Naive thymus-derived CD4-positive, alpha-beta T cell (primary cell): ENCODE measurements at regions of chr3 and their contacts with region 1.

Region 1: GRCh38 chr3:49673715-49674496 is at the start of gene APEH:
- DNase-seq: peak; percentile 94 to 99 (median 98)
- ATAC-seq: peak; percentile 93
- H3K4me3 ChIP-seq: peak within 1 kb of the TSS; percentile 79
- H3K4me3 Mint-ChIP-seq: peak within 1 kb of the TSS; percentile 90 to 97 (median 94)
- H3K27ac ChIP-seq: peak within 1 kb of the TSS; percentile 94
- H3K27ac Mint-ChIP-seq: peak within 1 kb of the TSS; percentile 93 to 99 (median 96)
- H3K4me1 ChIP-seq: peaks cover 16 to 31% of the 10 kb centered on the region in 2 donors
- H3K4me1 Mint-ChIP-seq: peaks cover 15 to 57% (median 38%) of the 10 kb centered on the region in 7 donors
- H3K27me3 ChIP-seq: no peaks in the 10 kb centered on the region
- H3K27me3 Mint-ChIP-seq: no peaks in the 10 kb centered on the region
- total RNA-seq, gene APEH: 75.5 to 151 (median 99.1) TPM

Region 2: DNA sequence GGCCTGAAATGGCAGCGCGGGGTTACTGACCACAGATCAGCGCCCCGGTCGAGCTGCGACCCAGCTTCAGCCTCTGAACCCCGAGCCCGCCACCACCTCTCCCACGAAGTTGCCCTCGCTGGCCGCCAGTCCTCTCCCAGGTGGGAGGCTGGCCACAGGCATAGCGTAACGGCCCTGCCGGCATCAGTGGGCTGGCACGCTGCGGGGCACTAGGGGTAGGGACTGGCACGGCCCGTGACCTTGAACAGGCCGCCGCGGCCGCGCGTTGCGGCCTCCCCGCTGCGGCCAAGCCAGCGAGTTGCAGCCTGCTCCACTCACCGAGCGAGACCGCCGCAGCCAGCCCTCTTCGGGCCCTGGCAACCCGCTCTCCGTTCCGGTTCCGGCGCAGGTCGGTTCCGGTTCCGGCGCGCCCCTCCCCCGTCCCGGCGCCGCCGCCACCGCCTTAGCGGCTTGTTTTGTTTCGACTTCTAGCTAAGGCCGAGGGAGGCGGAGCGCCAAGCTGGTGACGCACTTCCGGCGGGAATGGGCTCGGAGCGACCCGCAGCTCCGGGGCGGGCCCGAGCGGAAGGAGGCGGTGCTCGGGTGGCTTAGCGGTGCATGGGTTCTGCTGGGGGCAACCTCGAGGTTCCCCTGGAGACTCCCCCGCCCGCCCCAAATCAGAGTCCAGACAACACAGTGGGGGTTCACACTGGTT is 553.3 kb before region 1 on chr3 and contains the start of gene USP19:
- CTCF ChIA-PET with region 1: no interaction called
- POLR2A ChIA-PET with region 1: no interaction called
- intact Hi-C with region 1: loop called in 1 of 2 experiments (anchors 1 kb)
- DNase-seq: peak; percentile 92 to 96 (median 95)
- ATAC-seq: peak; percentile 96
- H3K4me3 ChIP-seq: peak within 1 kb of the TSS; percentile 70
- H3K4me3 Mint-ChIP-seq: peak within 1 kb of the TSS; percentile 80 to 97 (median 88)
- H3K27ac ChIP-seq: peak within 1 kb of the TSS; percentile 92
- H3K27ac Mint-ChIP-seq: peak within 1 kb of the TSS; percentile 83 to 96 (median 94)
- H3K4me1 ChIP-seq: peaks cover 17 to 27% of the 10 kb centered on the region in 2 donors
- H3K4me1 Mint-ChIP-seq: peaks cover 0 to 31% (median 25%) of the 10 kb centered on the region in 7 donors
- H3K27me3 ChIP-seq: no peaks in the 10 kb centered on the region
- H3K27me3 Mint-ChIP-seq: no peaks in the 10 kb centered on the region
- total RNA-seq, gene USP19: 60.0 to 106 (median 78.0) TPM

Region 3: DNA sequence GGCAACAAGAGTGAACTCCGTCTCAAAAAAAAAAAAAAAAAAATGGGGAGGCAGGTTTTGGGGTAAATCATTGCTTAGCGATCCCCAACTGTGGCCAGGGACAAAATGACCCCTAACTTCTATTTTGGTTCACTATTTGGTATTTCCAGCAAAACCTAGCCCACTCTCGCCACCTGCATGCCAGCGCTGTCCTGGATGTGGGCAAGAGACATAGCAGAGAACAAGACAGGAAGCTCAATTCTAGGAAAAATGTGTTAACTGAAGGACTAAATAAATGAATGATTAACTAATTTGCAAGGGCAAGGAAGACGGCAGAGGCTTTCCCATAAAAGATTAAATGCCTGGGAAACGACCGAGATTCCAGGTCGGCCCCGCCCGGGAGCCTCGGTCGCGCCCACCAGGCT is 245.2 kb before region 1 on chr3:
- CTCF ChIA-PET with region 1: no interaction called
- POLR2A ChIA-PET with region 1: no interaction called
- intact Hi-C with region 1: loop called in 1 of 2 experiments (anchors 1 kb)
- DNase-seq: peak in 1 of 9 donors; percentile 13
- ATAC-seq: no peak
- H3K4me3 ChIP-seq: peak overlapping the region; percentile 84
- H3K4me3 Mint-ChIP-seq: peak overlapping the region; percentile 88 to 98 (median 94)
- H3K27ac ChIP-seq: peak overlapping the region; percentile 83
- H3K27ac Mint-ChIP-seq: peak overlapping the region; percentile 49 to 96 (median 94)
- H3K4me1 ChIP-seq: peaks cover 0 to 5% of the 10 kb centered on the region in 2 donors
- H3K4me1 Mint-ChIP-seq: peaks cover 17 to 37% (median 28%) of the 10 kb centered on the region in 7 donors
- H3K27me3 ChIP-seq: no peaks in the 10 kb centered on the region
- H3K27me3 Mint-ChIP-seq: no peaks in the 10 kb centered on the region

Region 4: DNA sequence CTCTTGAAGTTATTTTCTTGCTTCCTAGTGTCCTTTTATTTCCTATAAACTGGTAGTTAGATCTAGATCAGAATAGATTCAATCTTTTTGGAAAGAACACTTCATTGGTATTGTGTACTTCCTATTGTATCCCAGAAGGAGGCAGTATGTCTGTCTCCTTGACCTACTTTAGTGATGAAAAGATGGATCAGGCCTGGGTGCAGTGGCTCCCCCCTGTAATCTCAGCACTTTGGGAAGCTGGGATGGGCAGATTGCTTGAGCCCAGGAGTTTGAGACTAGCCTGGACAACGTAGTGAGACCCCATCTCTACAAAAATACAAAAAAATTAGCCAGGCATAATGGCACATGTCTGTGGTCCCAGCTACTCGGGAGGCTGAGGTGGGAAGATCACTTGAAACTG is 107.6 kb before region 1 on chr3:
- CTCF ChIA-PET with region 1: interaction called, 3 read pairs
- POLR2A ChIA-PET with region 1: no interaction called
- intact Hi-C with region 1: loop called (anchors 1 kb)
- DNase-seq: no peak
- ATAC-seq: no peak
- H3K4me3 ChIP-seq: no peak overlapping the region
- H3K4me3 Mint-ChIP-seq: no peak overlapping the region
- H3K27ac ChIP-seq: no peak overlapping the region
- H3K27ac Mint-ChIP-seq: no peak overlapping the region
- H3K4me1 ChIP-seq: no peaks in the 10 kb centered on the region
- H3K4me1 Mint-ChIP-seq: no peaks in the 10 kb centered on the region
- H3K27me3 ChIP-seq: no peaks in the 10 kb centered on the region
- H3K27me3 Mint-ChIP-seq: peaks cover 0 to 27% (median 5%) of the 10 kb centered on the region in 5 donors

Region 5: DNA sequence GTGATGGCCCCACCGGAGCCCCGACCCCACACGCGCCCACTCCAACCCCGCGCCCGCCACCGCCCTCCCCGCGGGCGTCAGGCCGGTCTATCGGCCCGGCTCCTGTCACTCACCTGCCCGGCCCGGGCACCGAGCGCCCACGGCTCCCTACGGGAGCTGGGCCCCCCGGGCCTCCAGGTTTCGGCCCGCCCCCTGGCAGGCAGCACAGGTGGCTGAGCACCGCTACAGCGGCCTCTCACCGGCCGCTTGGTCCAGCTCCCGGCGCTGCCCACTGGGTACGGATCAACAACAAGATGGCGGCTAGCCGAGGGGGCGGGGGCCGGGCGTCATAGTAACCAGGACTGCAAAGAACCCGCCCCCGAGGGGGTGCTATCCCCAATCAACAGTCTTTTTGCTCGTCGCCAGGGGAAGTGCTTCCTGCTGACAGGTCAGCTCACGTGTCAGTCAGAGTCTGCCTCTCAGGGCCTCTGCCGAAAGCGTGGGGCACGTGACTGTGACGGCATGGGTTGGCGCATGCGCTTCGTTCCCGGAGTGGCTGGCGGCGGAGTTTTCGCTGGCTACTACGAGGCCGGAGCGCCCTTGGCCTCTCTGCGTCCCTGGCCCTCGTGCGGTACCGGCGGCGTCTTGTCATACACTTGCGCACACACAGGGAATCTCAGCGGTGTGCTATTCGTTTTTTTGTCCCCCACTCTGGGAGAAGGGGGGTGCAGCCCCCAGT is 112.5 kb after region 1 on chr3 and contains the start of gene IP6K1:
- CTCF ChIA-PET with region 1: no interaction called
- POLR2A ChIA-PET with region 1: interaction called, 3 read pairs
- intact Hi-C with region 1: loop called in 1 of 2 experiments (anchors 1 kb)
- DNase-seq: peak; percentile 90 to 100 (median 99)
- ATAC-seq: peak; percentile 99
- H3K4me3 ChIP-seq: peak within 1 kb of the TSS; percentile 80
- H3K4me3 Mint-ChIP-seq: peak within 1 kb of the TSS; percentile 91 to 99 (median 94)
- H3K27ac ChIP-seq: peak within 1 kb of the TSS; percentile 95
- H3K27ac Mint-ChIP-seq: peak within 1 kb of the TSS; percentile 96 to 100 (median 99)
- H3K4me1 ChIP-seq: peaks cover 9 to 12% of the 10 kb centered on the region in 2 donors
- H3K4me1 Mint-ChIP-seq: peaks cover 15 to 50% (median 32%) of the 10 kb centered on the region in 7 donors
- H3K27me3 ChIP-seq: no peaks in the 10 kb centered on the region
- H3K27me3 Mint-ChIP-seq: peaks cover 0 to 6% (median 0%) of the 10 kb centered on the region in 5 donors
- total RNA-seq, gene IP6K1: 41.8 to 57.0 (median 47.3) TPM

Region 6: DNA sequence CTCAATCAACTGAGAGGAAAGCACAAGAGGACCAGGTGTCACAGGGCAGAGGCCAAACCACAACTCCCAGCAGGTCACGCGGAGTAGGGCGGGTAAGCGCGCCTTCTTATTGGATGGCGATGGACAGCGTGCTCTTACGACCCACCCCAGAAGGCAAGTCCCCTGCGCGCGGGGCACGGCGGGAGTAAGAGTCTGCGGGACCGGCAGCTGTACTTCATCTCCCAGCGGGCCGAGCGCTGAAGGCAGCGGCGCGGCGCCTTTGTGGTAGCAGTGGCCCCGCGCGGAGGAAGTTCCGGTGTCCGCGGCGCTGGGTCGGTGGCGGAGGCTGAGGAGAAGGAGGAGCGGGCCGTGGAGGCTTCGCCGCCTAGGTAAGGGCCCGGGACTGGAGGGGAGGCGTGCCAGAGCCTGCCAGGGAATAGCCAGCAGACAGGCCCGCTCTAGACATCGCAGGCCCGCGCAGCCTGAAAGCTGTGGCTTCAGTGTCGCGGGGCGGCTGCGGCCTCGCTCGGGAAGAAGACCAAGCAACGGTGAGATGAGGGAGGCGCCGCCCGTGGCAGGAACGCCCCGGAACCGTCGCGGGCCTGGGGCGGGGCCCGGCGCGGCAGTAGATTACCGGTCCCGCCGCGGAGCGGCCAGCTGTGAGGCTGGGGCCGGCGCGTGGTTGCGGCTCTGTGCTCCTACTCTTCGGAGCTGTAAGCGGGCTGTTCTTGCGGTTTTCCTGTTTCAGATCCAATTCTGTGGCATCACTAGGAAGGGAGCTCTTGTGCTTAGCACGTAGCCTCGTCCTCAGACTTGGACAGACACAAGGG is 266.2 kb after region 1 on chr3 and contains the start of gene RBM6:
- CTCF ChIA-PET with region 1: no interaction called
- POLR2A ChIA-PET with region 1: interaction called, 3 read pairs
- intact Hi-C with region 1: loop called in 1 of 2 experiments (anchors 1 kb)
- DNase-seq: peak; percentile 84 to 95 (median 93)
- ATAC-seq: peak; percentile 98
- H3K4me3 ChIP-seq: peak within 1 kb of the TSS; percentile 88
- H3K4me3 Mint-ChIP-seq: peak within 1 kb of the TSS; percentile 93 to 100 (median 98)
- H3K27ac ChIP-seq: peak within 1 kb of the TSS; percentile 97
- H3K27ac Mint-ChIP-seq: peak within 1 kb of the TSS; percentile 91 to 99 (median 97)
- H3K4me1 ChIP-seq: peaks cover 8 to 15% of the 10 kb centered on the region in 2 donors
- H3K4me1 Mint-ChIP-seq: peaks cover 7 to 41% (median 32%) of the 10 kb centered on the region in 7 donors
- H3K27me3 ChIP-seq: no peaks in the 10 kb centered on the region
- H3K27me3 Mint-ChIP-seq: peaks cover 0 to 1% (median 0%) of the 10 kb centered on the region in 5 donors
- total RNA-seq, gene RBM6: 103 to 208 (median 153) TPM